HepG2 (cell line): ENCODE measurements at regions of chr10 and their contacts with region 1.

Region 1: DNA sequence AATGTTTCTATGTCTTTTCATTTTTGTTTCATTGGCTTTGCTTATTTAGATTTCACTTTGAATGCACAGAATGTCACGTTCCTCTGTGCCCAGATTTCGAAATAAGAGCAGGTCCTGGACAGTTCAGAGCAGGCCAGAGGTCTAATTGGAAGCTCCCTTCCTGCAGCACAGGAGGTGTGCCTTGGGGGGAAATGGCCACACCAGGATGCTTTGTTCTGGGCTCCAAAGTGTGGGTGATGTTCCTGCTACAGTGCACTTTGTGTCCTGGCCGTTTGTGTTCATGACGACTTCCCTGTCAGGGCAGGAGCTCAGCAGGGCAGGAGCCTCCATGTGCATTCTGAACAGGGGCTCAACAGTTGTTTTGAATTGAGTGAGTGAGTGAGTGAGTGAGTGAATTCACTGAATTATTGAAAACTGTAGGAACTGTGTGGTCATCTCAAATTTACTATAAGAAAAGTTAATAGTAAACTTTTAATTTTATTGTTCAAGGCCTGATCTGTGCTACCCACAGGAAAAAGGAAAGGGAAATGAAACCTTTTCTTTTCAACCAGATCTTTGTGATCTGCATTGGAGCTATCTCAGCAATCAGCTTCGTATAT is 109.5 kb upstream of the GJD4 start:
- DNase-seq: peak; percentile 63
- ATAC-seq: peak; percentile 94
- H3K4me3 ChIP-seq: no peak overlapping the region
- H3K27ac ChIP-seq: peak overlapping the region; percentile 46
- H3K4me1 ChIP-seq: peaks cover 33% of the 10 kb centered on the region
- H3K27me3 ChIP-seq: no peaks in the 10 kb centered on the region
- CTCF ChIP-seq: no peak
- EP300 ChIP-seq: no peak
- POLR2A ChIP-seq: no peak
- RAD21 ChIP-seq: no peak

Region 2: DNA sequence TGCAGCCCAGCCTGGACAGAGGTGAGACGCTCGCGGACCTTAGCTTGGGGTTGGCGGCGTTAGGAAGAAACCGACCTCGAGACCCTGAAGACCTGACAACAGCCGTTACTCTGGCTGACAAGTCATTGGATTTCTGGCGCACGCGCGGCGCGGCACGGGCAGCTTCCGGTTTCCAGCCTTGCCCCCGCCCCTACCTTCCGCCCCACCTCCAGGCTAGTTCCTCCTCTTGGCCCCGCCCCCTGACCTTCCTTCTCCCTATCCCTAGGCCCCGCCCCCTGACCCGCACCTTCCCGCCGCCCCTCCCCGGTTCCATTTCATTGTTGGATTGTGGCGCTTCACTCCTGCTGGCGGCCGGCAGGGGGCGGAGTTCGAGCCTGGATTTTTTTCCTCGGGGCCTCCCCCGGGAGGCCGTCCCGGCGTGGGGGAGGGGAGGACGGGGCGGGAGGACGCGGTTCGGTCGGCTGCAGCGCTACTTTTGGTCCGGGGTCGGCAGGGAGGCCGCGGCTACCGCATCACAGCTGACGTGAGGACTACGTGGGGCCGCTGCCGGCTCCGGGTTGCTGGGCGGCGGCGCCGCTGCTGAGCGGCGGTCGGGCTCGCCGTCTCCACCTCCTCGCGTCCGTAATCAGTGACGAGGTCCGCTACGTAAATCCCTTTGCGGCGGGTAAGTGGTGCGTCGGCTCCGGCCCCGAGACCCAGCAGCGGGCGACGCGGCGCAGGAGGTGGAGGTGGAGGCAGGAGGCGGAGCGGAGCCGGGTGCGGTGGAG is 368.9 kb before region 1 on chr10 and contains the start of gene CREM:
- CTCF ChIA-PET with region 1: no interaction called
- POLR2A ChIA-PET with region 1: no interaction called
- in situ Hi-C with region 1: no loop called
- intact Hi-C with region 1: no loop called
- DNase-seq: peak; percentile 91
- ATAC-seq: peak; percentile 92
- H3K4me3 ChIP-seq: peak within 1 kb of the TSS; percentile 94 to 100 (median 98)
- H3K27ac ChIP-seq: peak within 1 kb of the TSS; percentile 99
- H3K4me1 ChIP-seq: peaks cover 60% of the 10 kb centered on the region
- H3K27me3 ChIP-seq: no peaks in the 10 kb centered on the region; a peak in 1 of 5 replicates
- CTCF ChIP-seq: peak; percentile 89
- EP300 ChIP-seq: peak; percentile 18 to 41; a peak in 2 of 4 replicates
- POLR2A ChIP-seq: peak; percentile 75 to 88
- RAD21 ChIP-seq: no peak; the same call in none of the 2 replicates
- total RNA-seq, gene CREM: 25.4 and 30.6 TPM in 2 replicates

Region 3: GRCh38 chr10:35251373-35252100 is 244.1 kb before region 1 on chr10:
- CTCF ChIA-PET with region 1: no interaction called
- POLR2A ChIA-PET with region 1: no interaction called
- in situ Hi-C with region 1: no loop called
- intact Hi-C with region 1: loop called (anchors 1 kb)
- DNase-seq: no peak
- ATAC-seq: no peak
- H3K4me3 ChIP-seq: no peak overlapping the region
- H3K27ac ChIP-seq: no peak overlapping the region
- H3K4me1 ChIP-seq: no peaks in the 10 kb centered on the region
- H3K27me3 ChIP-seq: peaks cover 0 to 1% of the 10 kb centered on the region in 2 experiments; a peak in 1 of 5 replicates
- CTCF ChIP-seq: no peak
- EP300 ChIP-seq: no peak
- POLR2A ChIP-seq: no peak
- RAD21 ChIP-seq: no peak

Region 4: GRCh38 chr10:35447693-35448407 is 47.8 kb before region 1 on chr10:
- CTCF ChIA-PET with region 1: no interaction called
- POLR2A ChIA-PET with region 1: no interaction called
- in situ Hi-C with region 1: no loop called
- intact Hi-C with region 1: no loop called
- DNase-seq: peak; percentile 86
- ATAC-seq: peak; percentile 76
- H3K4me3 ChIP-seq: peak overlapping the region; percentile 36 to 60 (median 37)
- H3K27ac ChIP-seq: peak overlapping the region; percentile 74
- H3K4me1 ChIP-seq: peaks cover 80% of the 10 kb centered on the region
- H3K27me3 ChIP-seq: no peaks in the 10 kb centered on the region
- CTCF ChIP-seq: no peak
- EP300 ChIP-seq: peak in 1 of 2 experiments; percentile 58; a peak in 2 of 4 replicates
- POLR2A ChIP-seq: 0 out of 4 replicates have a peak, but pooled peaks of 1 of the 2 experiments have one; percentile 35
- RAD21 ChIP-seq: no peak

Region 5: DNA sequence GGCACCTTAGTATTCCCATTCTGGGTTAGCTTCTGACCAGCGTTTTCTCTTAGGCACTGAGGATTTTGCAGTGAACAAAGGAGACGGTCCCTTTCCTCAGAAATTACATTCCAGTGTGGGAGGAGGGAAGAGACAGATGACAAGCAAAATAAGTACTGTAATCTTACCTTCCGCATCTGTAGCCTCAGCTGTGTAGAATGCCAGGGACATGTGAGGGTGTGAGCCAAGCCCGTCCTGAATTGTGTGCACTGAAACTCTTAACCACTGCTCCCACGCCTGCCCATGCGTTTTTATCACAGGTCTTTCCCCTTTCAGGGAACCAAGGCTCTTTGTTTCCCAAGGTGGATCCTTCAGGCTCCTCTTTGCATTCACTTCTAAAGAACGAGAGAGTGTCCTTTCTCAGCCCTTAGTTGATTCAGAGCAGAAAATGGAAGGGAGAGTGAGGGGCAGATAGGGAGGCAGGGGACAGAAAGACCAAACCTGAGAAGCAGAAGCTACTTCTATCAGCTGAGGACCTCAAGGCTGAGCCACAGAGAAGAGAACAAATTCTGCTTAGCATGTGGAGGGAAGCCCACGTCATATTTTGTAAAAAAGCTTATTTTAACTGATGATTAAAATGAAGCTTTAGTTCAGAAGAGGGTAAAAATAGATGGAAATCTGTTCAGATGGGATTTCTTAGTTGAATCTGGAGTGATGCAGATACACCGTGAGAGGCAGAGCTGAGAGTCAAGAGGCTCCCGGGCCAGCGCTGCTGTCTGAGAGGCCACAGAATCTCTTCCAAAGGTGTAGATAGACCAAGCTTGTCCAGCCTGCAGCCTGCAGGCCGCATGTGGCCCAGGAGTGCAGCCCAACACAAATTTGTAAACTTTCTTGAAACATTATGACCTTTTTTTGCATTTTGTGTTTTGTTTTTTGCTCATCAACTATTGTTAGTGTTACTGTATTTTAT is 36.8 kb before region 1 on chr10:
- CTCF ChIA-PET with region 1: no interaction called
- POLR2A ChIA-PET with region 1: no interaction called
- in situ Hi-C with region 1: no loop called
- intact Hi-C with region 1: loop called (anchors 5 kb)
- DNase-seq: no peak
- ATAC-seq: no peak
- H3K4me3 ChIP-seq: no peak overlapping the region
- H3K27ac ChIP-seq: no peak overlapping the region
- H3K4me1 ChIP-seq: peaks cover 48% of the 10 kb centered on the region
- H3K27me3 ChIP-seq: no peaks in the 10 kb centered on the region
- CTCF ChIP-seq: no peak
- EP300 ChIP-seq: no peak
- POLR2A ChIP-seq: no peak
- RAD21 ChIP-seq: no peak

Region 6: GRCh38 chr10:35470260-35470918 is 25.2 kb before region 1 on chr10:
- CTCF ChIA-PET with region 1: no interaction called
- POLR2A ChIA-PET with region 1: no interaction called
- in situ Hi-C with region 1: no loop called
- intact Hi-C with region 1: loop called (anchors 2 kb)
- DNase-seq: no peak
- ATAC-seq: peak; percentile 45; the same call in 1 of the 3 replicates
- H3K4me3 ChIP-seq: no peak overlapping the region
- H3K27ac ChIP-seq: no peak overlapping the region
- H3K4me1 ChIP-seq: peaks cover 32% of the 10 kb centered on the region
- H3K27me3 ChIP-seq: no peaks in the 10 kb centered on the region
- CTCF ChIP-seq: no peak
- EP300 ChIP-seq: no peak
- POLR2A ChIP-seq: no peak
- RAD21 ChIP-seq: no peak

Region 7: DNA sequence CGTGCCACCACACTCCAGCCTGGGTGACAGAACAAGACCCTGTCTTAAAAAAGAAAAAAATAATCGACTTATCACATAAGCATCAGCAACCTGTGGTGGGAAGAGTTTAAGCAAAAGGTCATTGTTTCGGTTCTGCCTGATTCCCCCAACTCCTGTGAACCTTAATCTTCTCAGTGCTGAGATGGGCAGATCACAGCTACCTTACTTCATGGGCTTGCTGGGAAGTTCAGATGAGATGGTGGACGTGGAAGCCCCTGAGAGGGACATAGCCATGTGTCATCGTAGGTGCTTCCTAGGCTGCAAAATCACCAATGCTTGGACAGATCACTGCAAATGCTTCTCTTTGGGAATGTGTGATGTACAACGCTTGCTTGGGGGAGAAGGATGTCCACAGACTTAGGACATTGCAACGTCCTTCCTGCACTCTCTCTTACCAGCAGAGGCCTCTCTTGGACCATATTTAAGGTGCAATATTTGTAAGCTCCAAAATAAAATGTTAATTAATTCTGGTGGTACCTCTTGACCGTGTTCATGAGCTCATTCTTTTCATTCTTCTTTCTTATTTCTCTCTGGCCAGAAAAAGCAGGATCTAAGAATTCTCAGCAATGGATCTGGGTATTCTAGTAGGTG is 118.1 kb after region 1 on chr10:
- CTCF ChIA-PET with region 1: no interaction called
- POLR2A ChIA-PET with region 1: no interaction called
- in situ Hi-C with region 1: no loop called
- intact Hi-C with region 1: no loop called
- DNase-seq: peak; percentile 26
- ATAC-seq: peak; percentile 70
- H3K4me3 ChIP-seq: no peak overlapping the region
- H3K27ac ChIP-seq: no peak overlapping the region
- H3K4me1 ChIP-seq: peaks cover 33% of the 10 kb centered on the region
- H3K27me3 ChIP-seq: no peaks in the 10 kb centered on the region
- CTCF ChIP-seq: peak; percentile 64
- EP300 ChIP-seq: no peak
- POLR2A ChIP-seq: no peak
- RAD21 ChIP-seq: no peak